Activated T-helper 1 cell treated with anti-CD3 and anti-CD28 coated beads, Interleukin-12 subunit alpha, Interleukin-12 subunit beta, Interleukin-2, Interleukin-4 antibody, amounts not matched to agents 30 ng/mL and 10 ng/mL and 1 ng/mL, durations not matched to agents 14 hours and 24 hours and 36 hours (primary cell): ENCODE measurements at regions of chr12 and their contacts with region 1.

Region 1: GRCh38 chr12:21677622-21678277 is 20.1 kb upstream of the LDHB start:
- DNase-seq: no peak
- H3K4me3 Mint-ChIP-seq: no peak overlapping the region
- H3K27ac Mint-ChIP-seq: no peak overlapping the region
- H3K4me1 Mint-ChIP-seq: peaks cover 28% of the 10 kb centered on the region
- H3K27me3 Mint-ChIP-seq: peaks cover 8% of the 10 kb centered on the region

Region 2: GRCh38 chr12:19726122-19726521 is 1951.6 kb before region 1 on chr12:
- intact Hi-C with region 1: no loop called
- DNase-seq: no peak
- H3K4me3 Mint-ChIP-seq: no peak overlapping the region
- H3K27ac Mint-ChIP-seq: no peak overlapping the region
- H3K4me1 Mint-ChIP-seq: no peaks in the 10 kb centered on the region
- H3K27me3 Mint-ChIP-seq: no peaks in the 10 kb centered on the region

Region 3: GRCh38 chr12:21248679-21249078 is 429.1 kb before region 1 on chr12:
- intact Hi-C with region 1: loop called (anchors 1 kb)
- DNase-seq: no peak
- H3K4me3 Mint-ChIP-seq: no peak overlapping the region
- H3K27ac Mint-ChIP-seq: no peak overlapping the region
- H3K4me1 Mint-ChIP-seq: no peaks in the 10 kb centered on the region
- H3K27me3 Mint-ChIP-seq: peaks cover 2% of the 10 kb centered on the region

Region 4: GRCh38 chr12:21296751-21297406 is 380.9 kb before region 1 on chr12:
- intact Hi-C with region 1: loop called (anchors 1 kb)
- DNase-seq: no peak
- H3K4me3 Mint-ChIP-seq: no peak overlapping the region
- H3K27ac Mint-ChIP-seq: no peak overlapping the region
- H3K4me1 Mint-ChIP-seq: no peaks in the 10 kb centered on the region
- H3K27me3 Mint-ChIP-seq: peaks cover 14% of the 10 kb centered on the region

Region 5: DNA sequence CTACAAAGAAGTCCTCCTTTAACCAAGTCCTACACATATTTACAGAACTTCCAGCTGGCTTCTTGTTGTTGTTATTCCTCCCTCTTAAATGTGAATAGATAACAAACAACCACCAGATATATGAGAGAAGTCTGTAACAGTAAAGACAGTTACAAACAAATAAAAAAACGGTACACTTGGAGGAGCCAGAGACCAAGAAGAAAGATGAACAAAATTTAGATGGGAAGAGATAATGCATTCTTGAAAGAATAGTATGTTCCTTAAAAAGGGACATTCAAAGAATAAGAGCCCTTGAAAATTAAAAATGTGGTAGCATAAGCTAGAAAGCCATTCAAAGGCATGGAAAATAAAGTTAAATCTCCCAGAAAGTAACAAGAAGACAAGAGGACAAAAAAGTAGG is 369.0 kb before region 1 on chr12:
- intact Hi-C with region 1: loop called (anchors 1 kb)
- DNase-seq: no peak
- H3K4me3 Mint-ChIP-seq: no peak overlapping the region
- H3K27ac Mint-ChIP-seq: no peak overlapping the region
- H3K4me1 Mint-ChIP-seq: no peaks in the 10 kb centered on the region
- H3K27me3 Mint-ChIP-seq: peaks cover 6% of the 10 kb centered on the region

Region 6: GRCh38 chr12:21527451-21528180 is 150.1 kb before region 1 on chr12:
- intact Hi-C with region 1: loop called (anchors 1 kb)
- DNase-seq: peak; percentile 51
- H3K4me3 Mint-ChIP-seq: peak overlapping the region; percentile 86
- H3K27ac Mint-ChIP-seq: no peak overlapping the region
- H3K4me1 Mint-ChIP-seq: peaks cover 5% of the 10 kb centered on the region
- H3K27me3 Mint-ChIP-seq: peaks cover 27% of the 10 kb centered on the region

Region 7: DNA sequence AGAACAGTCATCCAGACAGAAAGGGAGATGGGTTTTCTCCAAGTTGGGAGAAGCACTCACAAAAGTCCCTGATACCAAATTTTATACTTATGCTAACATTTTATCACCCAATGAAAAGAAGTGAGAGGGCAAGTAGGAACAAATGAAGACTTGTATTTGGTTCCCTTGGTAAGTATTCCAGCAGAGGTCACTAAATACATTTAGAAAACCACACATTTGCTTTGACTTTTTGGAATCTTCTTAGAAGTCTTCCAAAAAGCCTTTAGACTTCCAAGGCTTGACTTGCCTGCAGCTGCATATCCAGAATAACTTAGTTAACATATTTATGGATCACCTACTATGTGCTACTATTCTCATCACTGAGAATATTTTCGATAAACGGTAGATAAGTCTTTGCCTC is 70.0 kb before region 1 on chr12:
- intact Hi-C with region 1: loop called (anchors 1 kb)
- DNase-seq: no peak
- H3K4me3 Mint-ChIP-seq: no peak overlapping the region
- H3K27ac Mint-ChIP-seq: no peak overlapping the region
- H3K4me1 Mint-ChIP-seq: no peaks in the 10 kb centered on the region
- H3K27me3 Mint-ChIP-seq: peaks cover 9% of the 10 kb centered on the region

Region 8: GRCh38 chr12:23115984-23116383 is 1438.2 kb after region 1 on chr12:
- intact Hi-C with region 1: no loop called
- DNase-seq: no peak
- H3K4me3 Mint-ChIP-seq: no peak overlapping the region
- H3K27ac Mint-ChIP-seq: no peak overlapping the region
- H3K4me1 Mint-ChIP-seq: no peaks in the 10 kb centered on the region
- H3K27me3 Mint-ChIP-seq: no peaks in the 10 kb centered on the region